Ascending aorta (tissue), 2 donors: ENCODE measurements at regions of chr20 and their contacts with region 1.

Region 1: DNA sequence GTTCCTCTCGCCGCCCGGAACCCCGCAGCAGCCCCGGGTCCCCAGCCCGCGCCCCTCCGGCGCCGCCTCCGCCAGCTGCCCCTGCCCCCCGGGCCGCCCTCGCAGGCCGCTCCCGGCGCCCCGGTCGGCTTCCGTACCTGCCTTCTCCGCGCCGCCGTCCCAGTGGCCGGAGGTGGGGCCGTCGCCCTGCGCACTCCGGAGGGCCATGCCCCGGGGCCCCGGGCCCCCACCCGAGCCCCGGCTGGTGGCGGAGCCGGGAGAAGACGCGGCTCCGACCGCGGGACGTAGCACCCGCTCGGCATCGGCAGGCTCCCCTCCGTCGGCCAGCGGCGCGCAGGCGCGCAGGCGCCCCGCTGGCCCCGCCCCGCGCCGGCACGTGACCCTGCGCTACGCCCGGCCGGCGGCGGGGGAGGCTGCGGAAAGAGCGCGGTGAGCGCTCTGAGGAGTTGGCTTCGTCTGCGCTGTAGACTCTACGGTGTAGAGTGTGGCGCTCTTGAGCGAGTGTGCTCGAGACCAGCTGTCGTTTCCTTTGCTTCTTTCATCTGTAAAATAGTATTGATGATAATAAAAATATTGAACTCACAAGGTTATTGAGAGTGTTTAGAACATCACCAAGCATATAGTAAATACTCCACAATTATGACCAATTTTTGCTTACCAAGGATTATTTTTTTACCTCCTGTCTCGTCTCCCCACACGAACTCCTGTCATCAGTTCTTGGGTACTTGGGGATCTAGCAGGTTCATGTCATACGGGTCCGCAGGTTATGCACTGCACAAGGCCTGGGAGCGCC is at the start of gene TBC1D20:
- DNase-seq: peak; percentile 24 to 86
- H3K4me3 ChIP-seq: peak within 1 kb of the TSS; percentile 84 to 96
- H3K27ac ChIP-seq: peak within 1 kb of the TSS; percentile 87 to 96
- H3K4me1 ChIP-seq: peaks cover 0 to 16% of the 10 kb centered on the region in 2 donors
- H3K27me3 ChIP-seq: no peaks in the 10 kb centered on the region
- CTCF ChIP-seq: peak in 2 of 3 experiments; percentile 27 to 30
- total RNA-seq, gene TBC1D20: 32.5 TPM

Region 2: GRCh38 chr20:266596-267562 is 195.5 kb before region 1 on chr20:
- intact Hi-C with region 1: loop called (anchors 10 kb)
- DNase-seq: peak; percentile 29 to 91
- H3K4me3 ChIP-seq: peak overlapping the region; percentile 52 to 69
- H3K27ac ChIP-seq: no peak overlapping the region
- H3K4me1 ChIP-seq: no peaks in the 10 kb centered on the region
- H3K27me3 ChIP-seq: no peaks in the 10 kb centered on the region
- CTCF ChIP-seq: peak; percentile 89 to 97 (median 94)

Region 3: GRCh38 chr20:347640-348484 is 114.5 kb before region 1 on chr20:
- intact Hi-C with region 1: loop called (anchors 1 kb)
- DNase-seq: peak; percentile 55 to 93
- H3K4me3 ChIP-seq: peak overlapping the region; percentile 67 to 83
- H3K27ac ChIP-seq: peak overlapping the region; percentile 84 to 90
- H3K4me1 ChIP-seq: peaks cover 0 to 6% of the 10 kb centered on the region in 2 donors
- H3K27me3 ChIP-seq: no peaks in the 10 kb centered on the region
- CTCF ChIP-seq: no peak

Region 4: DNA sequence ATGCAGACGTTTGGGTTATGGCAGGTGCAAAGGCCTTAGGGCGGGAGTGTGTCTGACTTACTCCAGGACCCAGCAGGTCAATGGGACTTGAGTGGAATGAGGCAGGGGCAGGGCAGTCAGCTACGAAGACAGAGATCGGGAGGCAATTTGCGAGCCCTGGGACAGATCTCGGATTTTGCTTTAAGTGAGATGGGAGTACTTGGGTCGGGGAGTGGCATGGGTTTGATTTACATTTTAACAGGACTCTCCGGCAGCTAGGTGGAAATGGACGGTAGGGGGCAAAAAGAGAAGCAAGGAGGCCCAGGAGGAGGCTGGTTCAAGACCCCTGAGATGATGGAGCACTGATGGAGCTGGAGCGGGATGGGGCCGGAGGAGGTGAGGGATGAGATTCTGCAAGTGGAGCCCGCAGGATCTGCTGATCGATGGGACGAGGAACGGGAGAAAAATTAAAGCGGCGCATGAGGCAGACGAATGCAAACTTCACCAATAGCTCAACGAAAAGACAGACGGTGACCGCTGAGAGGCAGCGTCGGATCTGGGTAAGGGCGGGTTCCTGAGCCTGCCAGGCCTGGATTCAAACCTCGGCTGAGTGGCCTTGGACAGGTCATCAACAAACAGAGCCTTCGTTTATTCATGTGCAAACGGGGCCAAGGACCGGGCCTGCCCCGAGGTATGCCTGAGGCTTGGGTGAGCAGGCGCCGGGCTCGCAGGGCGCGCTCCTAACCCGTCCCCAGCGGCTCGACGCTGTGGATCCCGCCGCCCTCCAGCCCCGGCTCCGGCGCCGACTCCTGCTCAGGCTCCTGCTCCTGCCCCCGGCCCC is 55.1 kb before region 1 on chr20:
- intact Hi-C with region 1: loop called (anchors 1 kb)
- DNase-seq: peak; percentile 20 to 81
- H3K4me3 ChIP-seq: peak overlapping the region; percentile 87 to 90
- H3K27ac ChIP-seq: peak overlapping the region; percentile 90 to 95
- H3K4me1 ChIP-seq: peaks cover 0 to 13% of the 10 kb centered on the region in 2 donors
- H3K27me3 ChIP-seq: no peaks in the 10 kb centered on the region
- CTCF ChIP-seq: peak in 2 of 3 experiments; percentile 7 to 28

Region 5: GRCh38 chr20:478949-479429 is 16.6 kb after region 1 on chr20:
- intact Hi-C with region 1: loop called (anchors 2 kb)
- DNase-seq: no peak
- H3K4me3 ChIP-seq: no peak overlapping the region
- H3K27ac ChIP-seq: no peak overlapping the region
- H3K4me1 ChIP-seq: peaks cover 0 to 7% of the 10 kb centered on the region in 2 donors
- H3K27me3 ChIP-seq: no peaks in the 10 kb centered on the region
- CTCF ChIP-seq: peak; percentile 39 to 64 (median 49)